CD8-positive, alpha-beta T cell (primary cell): ENCODE measurements at regions of chr5 and their contacts with region 1.

Region 1: DNA sequence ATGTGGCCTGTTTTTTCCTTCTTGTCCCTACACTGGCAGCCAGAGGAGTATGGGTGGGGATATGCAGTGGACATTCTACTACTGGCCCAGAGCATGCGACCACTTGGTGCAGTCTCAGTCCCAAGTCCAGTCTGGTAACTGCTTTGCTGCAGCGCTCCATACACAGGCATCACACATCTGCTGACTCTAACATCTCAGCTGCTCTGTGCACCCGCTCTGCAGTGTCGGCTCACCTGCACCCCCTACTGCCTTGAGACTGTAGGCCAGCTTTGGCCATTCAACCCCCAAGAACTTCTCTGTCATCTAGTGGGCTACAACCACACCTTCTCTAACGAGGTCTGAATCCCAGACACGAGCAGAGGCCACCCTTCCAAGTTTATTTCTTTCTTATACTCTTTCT is 46.4 kb upstream of the SLCO6A1 start:
- DNase-seq: no peak
- ATAC-seq: no peak
- H3K4me3 ChIP-seq: no peak overlapping the region
- H3K4me3 Mint-ChIP-seq: no peak overlapping the region
- H3K27ac ChIP-seq: no peak overlapping the region
- H3K27ac Mint-ChIP-seq: no peak overlapping the region
- H3K4me1 ChIP-seq: no peaks in the 10 kb centered on the region
- H3K4me1 Mint-ChIP-seq: no peaks in the 10 kb centered on the region
- H3K27me3 ChIP-seq: no peaks in the 10 kb centered on the region
- H3K27me3 Mint-ChIP-seq: no peaks in the 10 kb centered on the region
- CTCF ChIP-seq: no peak

Region 2: DNA sequence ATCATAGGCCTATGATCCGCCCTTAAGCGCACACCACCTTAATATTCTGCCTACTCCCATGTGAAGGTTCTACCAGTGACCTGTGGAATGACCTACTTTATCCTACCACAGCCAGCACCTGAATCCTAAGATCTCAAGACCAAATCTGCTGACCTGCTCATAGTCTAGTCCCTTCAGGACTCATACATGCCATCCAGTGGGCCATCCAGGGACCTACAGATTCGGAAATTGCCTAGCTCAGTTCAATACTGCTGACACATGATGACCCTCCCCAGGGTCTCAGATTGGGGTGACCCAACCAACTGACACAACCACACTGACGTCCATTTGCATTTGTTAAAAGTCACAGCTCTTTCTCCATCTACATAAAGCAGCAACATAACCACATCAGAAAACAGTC is 1198.3 kb before region 1 on chr5:
- CTCF ChIA-PET with region 1: no interaction called
- POLR2A ChIA-PET with region 1: no interaction called
- intact Hi-C with region 1: loop called in 1 of 2 experiments (anchors 5 kb)
- DNase-seq: no peak
- ATAC-seq: no peak
- H3K4me3 ChIP-seq: no peak overlapping the region
- H3K4me3 Mint-ChIP-seq: no peak overlapping the region
- H3K27ac ChIP-seq: no peak overlapping the region
- H3K27ac Mint-ChIP-seq: no peak overlapping the region
- H3K4me1 ChIP-seq: no peaks in the 10 kb centered on the region
- H3K4me1 Mint-ChIP-seq: no peaks in the 10 kb centered on the region
- H3K27me3 ChIP-seq: no peaks in the 10 kb centered on the region
- H3K27me3 Mint-ChIP-seq: no peaks in the 10 kb centered on the region
- CTCF ChIP-seq: no peak

Region 3: DNA sequence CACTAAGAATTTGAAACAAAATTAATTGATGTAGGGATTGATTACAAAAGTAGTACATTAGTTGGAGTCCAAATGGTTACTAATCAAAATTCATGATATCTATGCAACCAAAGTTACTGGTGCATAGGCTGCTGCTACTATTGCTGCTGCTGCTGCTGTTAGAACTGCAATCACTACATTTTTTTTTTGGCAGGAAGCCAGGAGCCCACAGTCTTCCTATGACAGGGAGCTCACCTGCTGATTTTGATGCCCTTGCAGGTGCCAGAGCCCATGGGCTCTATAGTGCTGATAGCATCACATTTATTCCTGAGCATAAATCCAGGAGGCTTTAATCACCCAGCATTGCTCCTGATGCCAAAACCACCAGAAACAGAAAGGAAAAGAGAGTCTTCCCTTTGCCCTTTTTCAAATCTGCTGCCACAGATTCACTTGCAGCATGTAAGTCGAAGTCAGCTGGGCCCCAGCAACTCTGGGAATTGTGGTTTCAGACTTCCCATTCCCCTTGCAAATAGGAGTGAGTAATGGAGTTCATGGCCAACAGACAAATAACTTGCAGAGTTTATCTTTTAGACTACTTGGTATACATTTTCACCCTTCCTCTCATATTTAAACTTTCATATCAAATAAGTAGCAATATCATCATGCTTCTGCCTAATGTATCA is 64.0 kb before region 1 on chr5:
- CTCF ChIA-PET with region 1: no interaction called
- POLR2A ChIA-PET with region 1: no interaction called
- intact Hi-C with region 1: no loop called
- DNase-seq: no peak
- ATAC-seq: no peak
- H3K4me3 ChIP-seq: no peak overlapping the region
- H3K4me3 Mint-ChIP-seq: no peak overlapping the region
- H3K27ac ChIP-seq: no peak overlapping the region
- H3K27ac Mint-ChIP-seq: no peak overlapping the region
- H3K4me1 ChIP-seq: no peaks in the 10 kb centered on the region
- H3K4me1 Mint-ChIP-seq: no peaks in the 10 kb centered on the region
- H3K27me3 ChIP-seq: no peaks in the 10 kb centered on the region
- H3K27me3 Mint-ChIP-seq: peaks cover 3% of the 10 kb centered on the region
- CTCF ChIP-seq: no peak

Region 4: DNA sequence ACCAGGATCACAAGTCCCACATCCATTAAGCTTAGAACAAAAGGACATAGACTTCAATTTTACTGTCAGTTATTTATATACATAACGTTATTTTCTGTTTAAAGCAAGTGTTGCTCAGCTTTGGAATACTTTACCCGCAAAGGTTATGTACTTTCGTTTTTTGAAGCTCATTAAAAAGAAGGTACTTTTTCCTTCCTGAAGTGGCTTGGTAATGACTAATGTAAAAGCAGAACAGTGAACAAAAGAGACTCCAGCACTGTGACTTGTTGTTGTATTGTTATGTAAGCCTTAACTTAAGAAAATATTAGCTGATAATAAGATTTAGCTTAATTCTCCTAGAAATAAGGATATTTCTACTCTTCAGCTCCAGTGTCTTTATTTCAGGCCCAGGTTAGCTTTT is 50.9 kb after region 1 on chr5:
- CTCF ChIA-PET with region 1: no interaction called
- POLR2A ChIA-PET with region 1: no interaction called
- intact Hi-C with region 1: no loop called
- DNase-seq: peak in 1 of 9 experiments; percentile 3
- ATAC-seq: no peak
- H3K4me3 ChIP-seq: no peak overlapping the region
- H3K4me3 Mint-ChIP-seq: no peak overlapping the region
- H3K27ac ChIP-seq: no peak overlapping the region
- H3K27ac Mint-ChIP-seq: no peak overlapping the region
- H3K4me1 ChIP-seq: no peaks in the 10 kb centered on the region
- H3K4me1 Mint-ChIP-seq: peaks cover 10% of the 10 kb centered on the region
- H3K27me3 ChIP-seq: no peaks in the 10 kb centered on the region
- H3K27me3 Mint-ChIP-seq: no peaks in the 10 kb centered on the region
- CTCF ChIP-seq: no peak